HepG2 (cell line): ENCODE measurements at regions of chr7 and their contacts with region 1.

Region 1: DNA sequence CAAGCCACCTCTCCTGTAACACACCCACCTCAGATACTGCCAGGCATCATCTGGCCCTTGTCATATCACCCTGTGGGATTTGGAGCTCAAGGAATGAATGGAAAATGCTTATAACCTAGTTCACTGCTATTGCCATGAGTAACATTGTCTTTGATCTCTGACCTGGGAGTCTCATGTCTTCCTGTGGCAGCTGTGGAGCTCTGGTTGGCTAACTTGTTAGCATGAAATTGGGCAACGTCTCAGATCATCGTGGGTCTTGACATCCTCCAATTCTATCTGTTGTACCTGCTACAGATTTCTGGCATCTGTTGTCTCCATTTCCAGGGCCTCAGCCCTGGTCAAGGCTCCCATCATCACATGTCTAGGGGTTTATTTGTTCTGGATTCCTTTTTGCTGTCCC is 2.2 kb upstream of the TMEM270 start:
- DNase-seq: no peak
- ATAC-seq: no peak
- H3K4me3 ChIP-seq: no peak overlapping the region
- H3K27ac ChIP-seq: no peak overlapping the region
- H3K4me1 ChIP-seq: peaks cover 6% of the 10 kb centered on the region
- H3K27me3 ChIP-seq: peaks cover 1 to 13% of the 10 kb centered on the region in 2 experiments; a peak in 3 of 5 replicates
- CTCF ChIP-seq: no peak
- EP300 ChIP-seq: no peak
- POLR2A ChIP-seq: no peak
- RAD21 ChIP-seq: no peak

Region 2: DNA sequence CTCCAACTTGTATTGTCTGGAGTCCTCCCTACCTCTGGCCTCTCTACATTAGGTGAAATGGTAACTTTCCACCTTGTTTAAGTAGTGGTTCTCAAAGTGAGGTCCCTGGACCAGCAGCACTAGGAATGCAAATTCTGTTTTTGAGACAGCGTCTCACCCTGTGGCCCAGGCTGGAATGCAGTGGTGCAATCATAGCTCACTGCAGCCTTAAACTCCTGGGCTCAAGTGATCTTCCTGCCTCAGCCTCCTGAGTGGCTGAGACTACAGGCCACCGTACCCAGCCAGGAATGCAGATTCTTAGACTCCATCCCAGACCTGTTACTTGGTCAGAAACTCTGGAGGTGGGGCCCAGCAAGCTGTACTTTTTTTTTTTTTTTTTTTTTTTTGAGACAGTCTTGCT is 273.6 kb before region 1 on chr7:
- CTCF ChIA-PET with region 1: no interaction called
- POLR2A ChIA-PET with region 1: no interaction called
- in situ Hi-C with region 1: no loop called
- intact Hi-C with region 1: no loop called
- DNase-seq: no peak
- ATAC-seq: peak; percentile 3; the same call in 1 of the 3 replicates
- H3K4me3 ChIP-seq: no peak overlapping the region
- H3K27ac ChIP-seq: no peak overlapping the region
- H3K4me1 ChIP-seq: peaks cover 39% of the 10 kb centered on the region
- H3K27me3 ChIP-seq: peaks cover 0 to 8% of the 10 kb centered on the region in 2 experiments; a peak in 1 of 5 replicates
- CTCF ChIP-seq: no peak
- EP300 ChIP-seq: no peak
- POLR2A ChIP-seq: no peak; a peak in 1 of 4 replicates
- RAD21 ChIP-seq: no peak

Region 3: DNA sequence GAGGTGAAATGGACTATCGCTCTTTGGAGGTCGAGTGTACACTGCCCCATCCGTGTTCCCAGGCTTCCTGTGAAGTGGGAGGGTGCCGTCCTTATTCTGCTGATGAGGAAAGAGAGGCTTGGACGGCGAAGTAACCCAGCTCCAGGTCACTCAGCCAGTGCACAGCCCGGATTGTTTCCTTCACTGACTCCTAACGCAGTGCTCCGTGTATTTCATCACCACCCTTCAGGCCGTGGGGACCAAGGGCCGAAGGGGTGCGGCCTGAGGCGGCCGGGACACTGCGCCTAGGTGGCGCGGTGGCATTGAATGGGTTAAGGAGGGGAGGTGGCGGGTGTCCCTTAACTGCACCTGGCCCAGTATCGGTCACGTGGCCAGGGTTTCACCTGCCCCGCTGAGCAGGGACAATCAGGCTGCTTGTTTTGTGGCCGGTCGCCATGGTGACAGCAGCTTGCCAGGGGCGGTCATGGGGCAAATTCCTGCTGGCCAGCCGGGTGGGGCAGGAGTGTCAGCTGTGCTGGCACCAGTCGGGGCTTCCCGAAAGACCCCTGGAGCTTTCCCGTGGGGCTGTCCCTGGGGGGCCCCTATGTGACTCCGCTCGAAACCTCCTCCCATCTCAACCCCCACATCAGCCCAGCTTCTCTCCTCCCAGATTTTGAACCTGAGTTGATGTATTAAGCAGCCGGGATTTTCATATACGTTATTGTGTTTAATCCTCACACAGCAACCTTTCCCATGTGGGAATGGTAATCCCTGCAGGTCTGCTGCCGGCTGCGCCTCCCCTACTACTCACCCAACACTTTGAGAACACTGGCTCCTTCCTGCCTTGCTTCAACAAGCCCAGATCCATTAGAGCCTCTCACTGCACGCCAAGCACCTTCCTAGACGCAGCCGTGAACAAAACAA is 115.9 kb before region 1 on chr7:
- CTCF ChIA-PET with region 1: no interaction called
- POLR2A ChIA-PET with region 1: no interaction called
- in situ Hi-C with region 1: no loop called
- intact Hi-C with region 1: loop called (anchors 5 kb)
- DNase-seq: peak; percentile 85
- ATAC-seq: peak; percentile 57
- H3K4me3 ChIP-seq: peak overlapping the region; percentile 24 to 67 (median 45); a peak in 5 of 6 replicates
- H3K27ac ChIP-seq: peak overlapping the region; percentile 34
- H3K4me1 ChIP-seq: peaks cover 32% of the 10 kb centered on the region
- H3K27me3 ChIP-seq: no peaks in the 10 kb centered on the region
- CTCF ChIP-seq: no peak
- EP300 ChIP-seq: peak in 1 of 2 experiments; percentile 27; a peak in 2 of 4 replicates
- POLR2A ChIP-seq: no peak; a peak in 1 of 4 replicates
- RAD21 ChIP-seq: no peak

Region 4: DNA sequence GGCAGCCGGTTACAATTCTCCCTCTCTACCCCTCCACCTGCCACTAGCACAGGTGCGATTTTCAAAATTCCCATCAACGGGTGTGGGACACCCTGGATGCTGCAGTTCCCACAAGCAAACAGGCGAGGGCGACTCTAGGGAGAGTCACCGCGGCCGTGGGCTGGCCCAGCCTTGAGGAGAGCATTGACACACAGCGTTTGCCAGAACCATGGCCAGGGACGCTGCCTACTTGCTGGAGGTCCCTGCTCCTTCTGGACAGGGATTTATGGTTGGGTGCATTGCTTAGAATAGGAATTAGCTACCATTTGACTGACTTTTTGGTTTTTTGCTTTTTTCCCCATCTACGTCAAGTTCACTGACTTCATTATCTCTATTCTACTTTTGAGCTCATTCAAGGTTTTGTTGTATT is 47.0 kb before region 1 on chr7:
- CTCF ChIA-PET with region 1: interaction called, 62 read pairs
- POLR2A ChIA-PET with region 1: no interaction called
- in situ Hi-C with region 1: loop called (anchors 5 kb)
- intact Hi-C with region 1: loop called (anchors 1 kb)
- DNase-seq: peak; percentile 54
- ATAC-seq: peak; percentile 98
- H3K4me3 ChIP-seq: no peak overlapping the region
- H3K27ac ChIP-seq: no peak overlapping the region
- H3K4me1 ChIP-seq: no peaks in the 10 kb centered on the region
- H3K27me3 ChIP-seq: peaks cover 0 to 1% of the 10 kb centered on the region in 2 experiments; a peak in 2 of 5 replicates
- CTCF ChIP-seq: peak; percentile 92
- EP300 ChIP-seq: no peak
- POLR2A ChIP-seq: no peak
- RAD21 ChIP-seq: peak; percentile 80

Region 5: GRCh38 chr7:75688200-75689136 is 1829.7 kb after region 1 on chr7:
- CTCF ChIA-PET with region 1: no interaction called
- POLR2A ChIA-PET with region 1: no interaction called
- in situ Hi-C with region 1: no loop called
- intact Hi-C with region 1: no loop called
- DNase-seq: peak; percentile 87
- ATAC-seq: peak; percentile 88
- H3K4me3 ChIP-seq: peak overlapping the region; percentile 32 to 66 (median 49); a peak in 5 of 6 replicates
- H3K27ac ChIP-seq: peak overlapping the region; percentile 70
- H3K4me1 ChIP-seq: peaks cover 58% of the 10 kb centered on the region
- H3K27me3 ChIP-seq: no peaks in the 10 kb centered on the region
- CTCF ChIP-seq: peak; percentile 53; the same call in 1 of the 2 replicates
- EP300 ChIP-seq: peak; percentile 26 to 80; a peak in 2 of 4 replicates
- POLR2A ChIP-seq: peak in 1 of 2 experiments; percentile 57; a peak in 2 of 4 replicates
- RAD21 ChIP-seq: no peak